Aorta (tissue), 5 donors: ENCODE measurements at regions of chr1 and their contacts with region 1.

Region 1: GRCh38 chr1:247078261-247079140 is at the start of gene ZNF670:
- DNase-seq: peak; percentile 96 to 98
- ATAC-seq: peak; percentile 99
- H3K4me3 ChIP-seq: peak within 1 kb of the TSS; percentile 86 to 94
- H3K27ac ChIP-seq: peak within 1 kb of the TSS in 1 of 2 donors; percentile 50
- H3K4me1 ChIP-seq: no peaks in the 10 kb centered on the region
- H3K27me3 ChIP-seq: no peaks in the 10 kb centered on the region
- total RNA-seq, gene ZNF670: 2.9 to 4.1 TPM

Region 2: GRCh38 chr1:246931549-246932365 is 146.7 kb before region 1 on chr1 and contains the start of gene AHCTF1:
- intact Hi-C with region 1: loop called in 1 of 2 experiments (anchors 10 kb)
- DNase-seq: peak; percentile 98
- ATAC-seq: peak; percentile 99
- H3K4me3 ChIP-seq: peak within 1 kb of the TSS; percentile 38 to 81
- H3K27ac ChIP-seq: peak within 1 kb of the TSS; percentile 33 to 84
- H3K4me1 ChIP-seq: no peaks in the 10 kb centered on the region
- H3K27me3 ChIP-seq: no peaks in the 10 kb centered on the region
- total RNA-seq, gene AHCTF1: 31.5 to 32.4 TPM